Left cardiac atrium (tissue), 4 donors: ENCODE measurements at regions of chr12 and their contacts with region 1.

Region 1: DNA sequence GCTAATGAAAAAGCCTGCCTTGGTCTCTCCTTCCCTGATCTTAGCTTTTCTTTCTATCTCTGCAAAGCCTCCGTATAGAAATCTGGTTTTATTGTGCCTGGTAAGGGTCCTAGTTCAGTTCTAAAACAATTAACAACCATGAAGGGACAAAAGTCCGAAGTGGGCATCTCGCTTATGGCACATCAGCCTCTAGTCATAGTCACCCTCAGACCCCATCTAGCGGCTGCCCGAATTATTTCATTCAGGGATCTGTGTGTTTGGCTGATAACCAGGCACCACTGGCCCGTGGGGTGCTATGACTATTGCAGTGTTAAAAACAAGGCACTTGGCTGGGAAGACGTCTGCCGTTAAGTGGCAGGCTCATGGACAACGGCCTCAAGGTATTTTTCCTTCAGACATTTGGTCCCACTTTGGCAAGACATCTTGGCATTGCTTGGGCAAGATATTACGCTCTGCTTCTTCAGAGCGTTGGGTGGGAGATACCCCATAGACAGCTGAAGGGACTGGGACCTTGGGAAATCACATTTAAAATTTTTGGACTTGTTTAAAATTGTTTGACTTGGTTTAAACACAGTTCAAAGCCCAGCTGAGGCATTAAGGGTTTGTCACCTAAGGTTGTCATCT is 87.1 kb downstream of the SINHCAF start:
- DNase-seq: peak; percentile 70
- ATAC-seq: peak; percentile 79 to 88

Region 2: GRCh38 chr12:30985814-30986452 is 252.9 kb before region 1 on chr12:
- intact Hi-C with region 1: loop called in 1 of 2 experiments (anchors 10 kb)
- DNase-seq: peak; percentile 62
- ATAC-seq: peak; percentile 57 to 76

Region 3: GRCh38 chr12:31021809-31022494 is 216.9 kb before region 1 on chr12:
- intact Hi-C with region 1: no loop called
- DNase-seq: no peak
- ATAC-seq: peak in 1 of 2 donors; percentile 18